Activated CD4-positive, alpha-beta memory T cell treated with anti-CD3 and anti-CD28 coated beads, Interleukin-2, amount 10 ng/mL, durations not matched to agents 7 days and 5 days (primary cell): ENCODE measurements at regions of chr6 and their contacts with region 1.

Region 1: DNA sequence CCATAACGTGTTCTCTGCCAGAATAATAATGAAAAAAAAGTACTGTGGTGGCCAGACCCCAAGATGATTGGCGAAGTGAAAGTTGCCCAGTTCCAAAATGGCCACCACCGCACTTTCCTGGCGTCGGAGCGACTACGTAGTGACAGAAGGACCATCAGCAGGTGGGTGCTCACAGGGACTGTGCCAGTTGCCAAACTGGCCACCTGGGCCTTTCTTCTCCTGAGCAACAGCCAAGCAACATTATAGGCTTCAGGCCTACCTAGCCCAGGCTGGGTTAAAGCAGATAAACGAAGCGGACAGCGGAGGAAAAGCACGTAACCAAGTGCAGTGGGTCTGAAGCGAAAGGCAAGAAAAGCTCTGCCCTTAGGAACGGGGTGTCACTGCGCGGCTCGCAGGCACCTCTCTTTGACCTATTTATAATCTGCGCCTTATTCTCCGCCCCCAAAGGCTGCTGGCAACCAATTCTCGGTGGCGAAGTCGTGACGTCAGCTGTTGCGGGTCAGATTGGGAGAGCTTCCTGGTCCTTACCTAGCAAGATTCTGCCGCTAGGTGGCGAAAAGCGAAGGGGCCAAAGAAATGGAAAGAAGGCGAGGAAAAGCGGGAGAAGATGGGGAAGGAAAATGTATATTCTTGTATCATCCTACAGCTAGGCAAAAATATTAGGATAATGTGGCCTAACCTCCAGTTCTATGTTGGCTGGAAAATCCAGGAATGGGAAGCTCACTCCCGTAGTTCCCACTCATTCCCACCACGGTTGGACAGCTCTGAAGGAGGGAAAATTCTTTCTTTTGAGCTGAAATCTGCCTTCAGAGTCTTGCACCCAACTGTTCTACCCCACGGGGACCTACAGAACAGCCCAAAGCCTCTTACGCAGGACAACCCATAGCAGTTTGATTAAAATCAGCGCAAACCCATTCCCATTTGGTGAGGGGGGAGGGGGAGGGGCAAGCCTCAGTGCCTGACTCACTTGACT is 6.9 kb upstream of the MOG start:
- DNase-seq: peak; percentile 98
- H3K4me3 Mint-ChIP-seq: peak overlapping the region; percentile 87
- H3K27ac Mint-ChIP-seq: peak overlapping the region; percentile 96
- H3K4me1 Mint-ChIP-seq: peaks cover 12% of the 10 kb centered on the region
- H3K27me3 Mint-ChIP-seq: peaks cover 6% of the 10 kb centered on the region

Region 2: GRCh38 chr6:29564875-29565274 is 85.1 kb before region 1 on chr6:
- CTCF ChIA-PET with region 1: no interaction called
- POLR2A ChIA-PET with region 1: no interaction called
- DNase-seq: no peak
- H3K4me3 Mint-ChIP-seq: no peak overlapping the region
- H3K27ac Mint-ChIP-seq: no peak overlapping the region
- H3K4me1 Mint-ChIP-seq: peaks cover 7% of the 10 kb centered on the region
- H3K27me3 Mint-ChIP-seq: peaks cover 27% of the 10 kb centered on the region

Region 3: DNA sequence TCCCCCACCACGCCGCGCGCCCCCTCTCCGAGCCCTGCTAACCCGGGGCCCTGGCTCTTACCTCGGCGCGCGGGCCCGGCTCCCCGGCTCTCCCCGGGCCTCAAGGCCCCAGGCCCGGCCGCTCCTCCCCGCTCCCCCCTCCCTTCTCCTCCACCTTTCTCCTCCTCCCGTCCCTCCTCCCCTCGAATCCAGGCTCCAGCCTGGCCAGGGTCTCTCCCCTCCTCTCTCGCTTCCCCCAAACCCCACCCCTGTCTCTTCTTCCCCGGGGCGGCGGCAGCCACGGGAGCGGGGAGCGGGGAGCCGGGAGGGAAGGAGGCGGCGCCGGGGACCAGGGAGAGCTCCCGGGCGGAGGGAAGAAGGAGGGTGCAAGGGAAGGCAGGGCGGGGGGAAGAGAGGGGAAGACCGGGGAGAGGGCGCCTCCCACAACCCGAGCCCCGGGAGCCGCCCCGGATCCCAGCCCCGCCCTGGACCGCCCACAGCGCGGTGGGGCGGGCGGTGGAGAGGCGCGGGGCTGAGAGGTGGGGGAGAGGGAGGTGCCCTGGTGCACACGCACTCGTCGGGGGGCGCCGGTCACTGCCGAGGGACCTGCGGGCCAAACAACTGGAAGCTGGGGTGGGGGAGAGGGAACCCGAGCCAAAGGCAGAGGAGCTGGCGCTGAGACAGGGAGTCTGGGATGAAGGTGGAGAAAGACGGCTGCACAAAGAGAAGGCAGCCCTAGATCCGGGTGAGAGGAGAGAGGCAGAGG is 17.0 kb before region 1 on chr6 and contains the start of gene GABBR1:
- CTCF ChIA-PET with region 1: interaction called, 164 read pairs
- POLR2A ChIA-PET with region 1: interaction called, 11 read pairs
- DNase-seq: peak; percentile 80
- H3K4me3 Mint-ChIP-seq: peak within 1 kb of the TSS; percentile 79
- H3K27ac Mint-ChIP-seq: peak within 1 kb of the TSS; percentile 57
- H3K4me1 Mint-ChIP-seq: peaks cover 46% of the 10 kb centered on the region
- H3K27me3 Mint-ChIP-seq: peaks cover 49% of the 10 kb centered on the region
- total RNA-seq, gene GABBR1: 32.8 to 35.0 TPM

Region 4: DNA sequence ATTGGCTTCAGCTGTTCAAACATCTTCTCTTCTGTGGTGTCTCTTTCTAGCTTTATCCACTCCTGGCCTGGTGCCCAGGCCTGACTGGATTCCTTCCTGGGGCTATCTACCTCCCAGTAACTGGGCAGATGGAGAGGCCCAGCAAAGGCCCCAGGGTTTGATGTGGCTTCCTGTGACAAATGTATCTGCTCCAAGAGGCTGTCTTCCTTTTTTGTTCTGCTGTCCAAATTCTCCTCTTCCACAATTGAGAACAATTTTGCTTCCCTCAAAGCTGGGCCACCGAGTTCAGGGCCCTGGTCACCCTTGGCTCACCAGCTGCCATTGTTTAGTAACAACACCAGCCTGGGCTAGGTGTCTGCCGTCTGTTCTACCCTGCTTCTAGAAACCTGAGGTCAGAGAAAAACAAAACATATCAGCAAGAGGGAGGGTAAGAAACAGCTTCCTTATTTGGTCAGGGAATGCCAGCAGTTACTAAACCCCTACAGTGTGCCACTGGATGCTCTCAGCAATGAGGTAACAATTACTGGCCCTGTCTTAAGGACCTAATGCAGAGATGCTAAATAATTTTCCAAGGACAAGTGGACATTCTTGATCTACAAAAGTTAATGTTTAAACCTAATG is 27.1 kb after region 1 on chr6:
- CTCF ChIA-PET with region 1: interaction called, 13 read pairs
- POLR2A ChIA-PET with region 1: interaction called, 3 read pairs
- DNase-seq: no peak
- H3K4me3 Mint-ChIP-seq: no peak overlapping the region
- H3K27ac Mint-ChIP-seq: no peak overlapping the region
- H3K4me1 Mint-ChIP-seq: peaks cover 10% of the 10 kb centered on the region
- H3K27me3 Mint-ChIP-seq: no peaks in the 10 kb centered on the region

Region 5: DNA sequence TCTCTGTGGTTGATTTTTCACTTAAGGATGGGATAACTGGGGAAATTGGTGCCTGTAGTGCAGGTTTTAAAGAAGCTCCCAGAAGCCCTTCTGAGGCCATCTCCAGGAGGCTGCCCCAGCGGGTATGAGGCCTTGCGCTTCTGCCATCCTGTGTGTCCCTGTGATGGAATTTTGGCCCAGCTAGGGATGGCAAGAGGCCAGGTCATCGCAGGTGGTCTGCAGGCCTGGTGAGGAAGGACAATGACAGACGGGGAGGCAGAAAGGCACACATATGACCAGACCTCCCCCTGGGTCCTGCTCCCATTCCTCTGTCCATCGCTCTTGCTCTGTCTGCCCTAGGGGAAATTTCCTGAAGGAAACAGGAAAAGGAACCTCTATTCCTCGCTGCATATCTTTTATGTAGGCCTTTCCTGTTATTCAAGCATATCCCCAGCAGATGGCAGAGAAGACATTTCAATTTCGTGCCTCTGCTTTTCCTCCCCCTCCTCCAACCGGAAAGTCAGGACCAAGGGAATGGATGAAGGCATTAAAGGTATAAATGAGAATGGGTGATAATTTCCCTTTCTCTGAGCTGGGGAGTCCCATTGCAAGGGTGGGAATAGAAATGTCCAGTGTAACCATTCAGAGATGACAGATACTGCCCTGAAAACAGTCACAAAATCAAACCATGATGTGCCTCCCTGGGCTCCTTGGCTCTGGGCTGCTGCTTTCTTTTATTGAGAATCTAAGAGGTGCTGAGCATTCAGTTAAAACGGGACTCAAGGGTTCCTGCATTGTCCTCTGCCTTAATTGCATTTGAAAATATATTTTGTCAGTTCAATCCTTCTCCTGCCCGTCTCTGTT is 55.6 kb after region 1 on chr6:
- CTCF ChIA-PET with region 1: interaction called, 10 read pairs
- POLR2A ChIA-PET with region 1: no interaction called
- DNase-seq: no peak
- H3K4me3 Mint-ChIP-seq: no peak overlapping the region
- H3K27ac Mint-ChIP-seq: no peak overlapping the region
- H3K4me1 Mint-ChIP-seq: peaks cover 41% of the 10 kb centered on the region
- H3K27me3 Mint-ChIP-seq: peaks cover 33% of the 10 kb centered on the region

Region 6: GRCh38 chr6:29737707-29738630 is 88.0 kb after region 1 on chr6:
- CTCF ChIA-PET with region 1: interaction called, 17 read pairs
- POLR2A ChIA-PET with region 1: no interaction called
- DNase-seq: peak; percentile 76
- H3K4me3 Mint-ChIP-seq: no peak overlapping the region
- H3K27ac Mint-ChIP-seq: no peak overlapping the region
- H3K4me1 Mint-ChIP-seq: peaks cover 7% of the 10 kb centered on the region
- H3K27me3 Mint-ChIP-seq: no peaks in the 10 kb centered on the region

Region 7: DNA sequence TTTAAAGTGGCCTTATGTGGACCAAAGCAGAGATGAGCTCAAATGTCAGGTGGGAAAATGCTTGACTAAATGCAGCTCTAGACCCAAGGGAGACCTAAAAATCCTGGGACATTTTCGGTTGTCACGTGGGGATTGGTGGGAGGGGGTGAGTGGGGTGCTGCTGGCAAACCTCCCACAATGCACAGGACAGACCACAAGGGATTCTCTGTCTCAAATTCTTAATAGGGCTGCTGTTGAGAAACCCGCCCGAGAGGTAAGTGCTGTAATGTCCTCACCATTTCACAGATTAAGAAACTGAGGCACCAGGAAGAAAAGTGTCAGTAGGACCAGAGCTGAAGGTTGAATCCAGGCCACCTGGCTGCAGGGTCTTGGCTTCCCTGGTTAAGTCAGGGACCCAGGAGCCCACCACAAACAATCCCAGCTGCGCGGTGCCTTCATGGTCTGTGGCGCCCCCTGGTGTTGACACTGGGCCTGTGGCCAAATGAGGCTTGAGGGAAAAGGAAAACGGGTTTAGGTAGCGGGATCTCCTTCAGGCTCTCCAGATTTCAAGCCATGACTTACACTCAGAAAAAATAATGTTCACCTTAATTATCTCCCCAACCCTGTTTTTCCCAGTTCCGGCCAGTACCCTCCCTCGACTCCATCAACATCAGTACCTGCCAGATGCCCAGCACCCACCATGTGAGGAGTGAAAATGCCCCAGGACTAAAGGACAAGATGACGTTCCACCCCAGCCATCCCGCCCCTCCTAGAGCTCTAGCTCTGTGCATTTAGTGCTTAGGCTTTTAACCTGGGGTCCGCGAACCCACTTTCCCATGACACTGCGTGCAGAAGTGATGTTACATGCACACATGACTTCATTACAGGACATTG is 184.8 kb after region 1 on chr6:
- CTCF ChIA-PET with region 1: interaction called, 15 read pairs
- POLR2A ChIA-PET with region 1: no interaction called
- DNase-seq: peak; percentile 56
- H3K4me3 Mint-ChIP-seq: no peak overlapping the region
- H3K27ac Mint-ChIP-seq: no peak overlapping the region
- H3K4me1 Mint-ChIP-seq: peaks cover 9% of the 10 kb centered on the region
- H3K27me3 Mint-ChIP-seq: peaks cover 62% of the 10 kb centered on the region

Region 8: GRCh38 chr6:30093951-30094661 is 444.1 kb after region 1 on chr6:
- CTCF ChIA-PET with region 1: no interaction called
- POLR2A ChIA-PET with region 1: no interaction called
- DNase-seq: no peak
- H3K4me3 Mint-ChIP-seq: no peak overlapping the region
- H3K27ac Mint-ChIP-seq: no peak overlapping the region
- H3K4me1 Mint-ChIP-seq: peaks cover 7% of the 10 kb centered on the region
- H3K27me3 Mint-ChIP-seq: peaks cover 83% of the 10 kb centered on the region